Psoas muscle (tissue), 8 donors: ENCODE measurements at regions of chr1 and their contacts with region 1.

Region 1: GRCh38 chr1:40618108-40618507 is 47.4 kb downstream of the RIMS3 start:
- DNase-seq: no peak
- ATAC-seq: no peak
- H3K4me3 ChIP-seq: no peak overlapping the region
- H3K27ac ChIP-seq: no peak overlapping the region
- H3K4me1 ChIP-seq: no peaks in the 10 kb centered on the region
- H3K27me3 ChIP-seq: no peaks in the 10 kb centered on the region
- CTCF ChIP-seq: no peak

Region 2: DNA sequence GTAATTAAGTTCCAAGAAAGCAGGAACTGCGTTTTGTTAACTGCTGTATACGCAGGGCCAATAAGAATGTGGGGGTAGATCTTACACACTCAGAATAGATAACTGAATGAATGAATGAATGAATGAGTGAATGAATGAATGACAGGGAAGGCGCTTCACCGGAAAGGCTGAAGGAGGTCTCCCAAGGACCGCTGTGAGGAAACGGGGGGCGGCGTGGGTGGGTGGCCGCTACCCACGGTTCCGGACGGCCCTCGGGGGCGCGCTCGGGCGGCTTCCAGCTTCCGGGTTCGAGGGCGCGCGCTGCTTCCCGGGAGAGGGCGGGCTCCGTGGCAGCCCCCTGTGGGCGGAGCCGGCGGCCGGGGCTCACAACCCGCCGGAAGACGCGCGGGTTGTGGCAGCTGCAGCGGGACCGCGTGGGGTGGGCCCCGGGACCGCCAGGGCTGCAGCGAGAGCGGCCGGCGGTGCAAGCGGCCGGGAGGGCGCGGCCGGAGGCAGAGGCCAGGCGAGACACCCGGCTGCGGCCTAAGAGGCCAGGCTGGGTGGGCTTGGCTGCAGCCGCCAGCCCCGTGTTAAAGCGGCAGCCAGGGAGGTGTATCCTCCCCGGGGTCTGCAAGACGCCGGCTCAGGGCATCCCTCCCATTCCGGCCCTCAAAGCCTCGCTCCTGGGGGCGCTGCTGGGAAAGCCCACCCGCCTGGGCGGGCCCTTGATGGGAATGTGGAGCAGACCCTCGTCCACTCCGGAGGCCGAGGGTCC is 141.0 kb before region 1 on chr1 and contains the start of gene ZFP69:
- intact Hi-C with region 1: no loop called
- DNase-seq: peak; percentile 77 to 82
- ATAC-seq: peak; percentile 37 to 81 (median 68)
- H3K4me3 ChIP-seq: peak within 1 kb of the TSS; percentile 78
- H3K27ac ChIP-seq: peak within 1 kb of the TSS; percentile 30
- H3K4me1 ChIP-seq: peaks cover 5% of the 10 kb centered on the region
- H3K27me3 ChIP-seq: peaks cover 0 to 35% (median 0%) of the 10 kb centered on the region in 3 donors
- CTCF ChIP-seq: no peak
- total RNA-seq, gene ZFP69: 0.18 to 0.54 (median 0.46) TPM

Region 3: GRCh38 chr1:40662864-40663263 is 44.8 kb after region 1 on chr1:
- intact Hi-C with region 1: loop called (anchors 5 kb)
- DNase-seq: no peak
- ATAC-seq: no peak
- H3K4me3 ChIP-seq: no peak overlapping the region
- H3K27ac ChIP-seq: no peak overlapping the region
- H3K4me1 ChIP-seq: peaks cover 8% of the 10 kb centered on the region
- H3K27me3 ChIP-seq: no peaks in the 10 kb centered on the region
- CTCF ChIP-seq: no peak

Region 4: GRCh38 chr1:40736085-40736531 is 118.0 kb after region 1 on chr1:
- intact Hi-C with region 1: no loop called
- DNase-seq: no peak
- ATAC-seq: peak; percentile 59 to 83 (median 70)
- H3K4me3 ChIP-seq: no peak overlapping the region
- H3K27ac ChIP-seq: peak overlapping the region; percentile 77
- H3K4me1 ChIP-seq: peaks cover 63% of the 10 kb centered on the region
- H3K27me3 ChIP-seq: no peaks in the 10 kb centered on the region
- CTCF ChIP-seq: no peak